Esophagus squamous epithelium (tissue), 5 donors: ENCODE measurements at regions of chr17 and their contacts with region 1.

Region 1: DNA sequence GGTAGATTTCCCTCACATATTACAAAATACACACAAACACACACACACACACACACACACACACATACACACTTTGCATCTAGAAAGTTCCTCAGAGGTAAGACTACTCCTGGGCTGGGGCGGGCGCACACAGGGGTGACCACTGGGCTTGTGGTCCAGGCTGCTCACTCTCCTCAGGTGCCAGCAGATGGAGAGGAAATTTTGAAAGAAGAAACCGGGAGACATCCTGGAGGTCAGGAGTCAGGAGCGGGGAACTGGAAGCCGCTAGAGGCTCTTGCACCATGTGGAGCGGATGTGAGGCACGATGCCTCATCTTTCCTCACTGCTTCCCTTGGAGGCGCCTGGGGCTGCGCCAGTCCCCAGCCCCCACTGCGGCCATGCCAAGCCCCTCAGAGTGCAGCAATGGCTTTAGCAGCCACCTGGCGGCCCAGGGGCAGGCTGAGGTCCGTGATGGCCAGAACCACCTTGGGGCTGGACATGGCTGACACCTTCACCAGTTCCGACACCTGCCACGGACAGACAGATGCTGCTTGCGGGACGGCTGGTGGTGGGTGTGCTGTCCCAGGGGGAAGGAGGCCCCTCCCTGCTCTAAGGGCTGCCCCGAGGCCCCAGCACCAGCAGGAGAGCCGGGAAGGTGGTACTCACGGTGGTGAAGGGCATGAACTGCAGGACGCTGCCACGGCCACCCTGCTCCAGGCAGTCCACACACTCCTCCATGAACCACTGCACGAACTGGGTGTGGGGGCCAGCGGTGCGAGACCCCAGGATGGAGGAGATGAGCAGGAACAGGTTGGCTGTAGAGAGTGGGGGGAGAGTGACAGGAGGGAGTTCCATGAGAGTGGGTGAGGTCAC is 4.1 kb downstream of the CSF3 start:
- DNase-seq: no peak
- H3K4me3 ChIP-seq: no peak overlapping the region
- H3K27ac ChIP-seq: peak overlapping the region in 3 of 4 donors; percentile 57 to 80 (median 67)
- H3K4me1 ChIP-seq: peaks cover 17 to 91% (median 71%) of the 10 kb centered on the region in 3 donors
- H3K27me3 ChIP-seq: no peaks in the 10 kb centered on the region
- CTCF ChIP-seq: peak in 1 of 6 experiments; percentile 6
- POLR2A ChIP-seq: no peak

Region 2: DNA sequence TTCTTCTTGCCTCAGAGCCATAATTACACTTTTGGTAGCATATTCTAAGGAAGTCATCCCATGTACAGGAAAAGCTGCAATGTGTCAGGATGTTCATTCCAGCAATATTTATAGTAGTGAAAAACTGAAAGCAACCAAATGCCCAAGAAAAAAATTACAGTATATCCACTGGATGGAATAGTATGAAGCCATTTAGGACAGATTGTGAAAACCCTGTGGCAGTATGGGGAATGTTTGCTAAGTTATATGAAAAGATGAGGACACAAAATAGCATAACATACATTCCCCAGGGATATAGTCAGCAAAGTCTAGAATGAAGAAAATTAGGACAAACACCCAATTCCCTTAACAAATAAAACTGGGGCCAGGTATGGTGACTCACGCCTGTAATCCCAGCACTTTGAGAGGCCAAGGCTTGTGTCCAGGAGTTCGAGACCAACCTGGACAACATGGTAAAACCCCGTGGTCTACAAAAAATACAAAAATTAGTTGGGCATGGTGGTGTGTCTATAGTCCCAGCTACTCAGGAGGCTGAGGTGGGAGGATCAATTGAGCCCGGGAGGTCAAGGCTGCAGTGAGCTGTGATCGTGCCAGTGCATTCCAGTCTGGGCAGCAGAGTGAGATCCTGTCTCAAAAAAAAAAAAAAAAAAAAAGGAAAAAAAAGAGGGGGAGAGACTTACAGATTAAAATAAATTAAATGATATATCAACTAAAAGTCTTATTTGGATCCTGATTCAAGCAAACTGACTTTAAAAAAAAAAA is 89.5 kb before region 1 on chr17:
- intact Hi-C with region 1: no loop called
- DNase-seq: no peak
- H3K4me3 ChIP-seq: no peak overlapping the region
- H3K27ac ChIP-seq: peak overlapping the region in 3 of 4 donors; percentile 92 to 93 (median 92)
- H3K4me1 ChIP-seq: peaks cover 30 to 48% (median 39%) of the 10 kb centered on the region in 3 donors
- H3K27me3 ChIP-seq: no peaks in the 10 kb centered on the region
- CTCF ChIP-seq: no peak
- POLR2A ChIP-seq: no peak

Region 3: GRCh38 chr17:40086150-40087044 is 67.0 kb after region 1 on chr17:
- intact Hi-C with region 1: loop called (anchors 10 kb)
- DNase-seq: no peak
- H3K4me3 ChIP-seq: no peak overlapping the region
- H3K27ac ChIP-seq: peak overlapping the region in 1 of 4 donors; percentile 27
- H3K4me1 ChIP-seq: peaks cover 1 to 28% (median 8%) of the 10 kb centered on the region in 3 donors
- H3K27me3 ChIP-seq: no peaks in the 10 kb centered on the region
- CTCF ChIP-seq: peak; percentile 65 to 84 (median 76)
- POLR2A ChIP-seq: no peak